ENCODE measurements at regions of chr5 and their contacts with region 1.

Region 1: GRCh38 chr5:135887351-135887864 is 8.2 kb downstream of the IL9 start:
- DNase-seq: peak; percentile 33
- ATAC-seq: peak; percentile 74
- H3K4me3 Mint-ChIP-seq: peak overlapping the region; percentile 25
- H3K27ac Mint-ChIP-seq: no peak overlapping the region
- H3K4me1 Mint-ChIP-seq: peaks cover 6% of the 10 kb centered on the region
- H3K27me3 Mint-ChIP-seq: peaks cover 4% of the 10 kb centered on the region
- CTCF ChIP-seq: peak; percentile 71

Region 2: GRCh38 chr5:136062366-136063274 is 175.2 kb after region 1 on chr5:
- CTCF ChIA-PET with region 1: no interaction called
- POLR2A ChIA-PET with region 1: no interaction called
- intact Hi-C with region 1: loop called (anchors 5 kb)
- DNase-seq: no peak
- ATAC-seq: peak; percentile 25
- H3K4me3 Mint-ChIP-seq: no peak overlapping the region
- H3K27ac Mint-ChIP-seq: no peak overlapping the region
- H3K4me1 Mint-ChIP-seq: no peaks in the 10 kb centered on the region
- H3K27me3 Mint-ChIP-seq: peaks cover 3% of the 10 kb centered on the region
- CTCF ChIP-seq: no peak

Region 3: DNA sequence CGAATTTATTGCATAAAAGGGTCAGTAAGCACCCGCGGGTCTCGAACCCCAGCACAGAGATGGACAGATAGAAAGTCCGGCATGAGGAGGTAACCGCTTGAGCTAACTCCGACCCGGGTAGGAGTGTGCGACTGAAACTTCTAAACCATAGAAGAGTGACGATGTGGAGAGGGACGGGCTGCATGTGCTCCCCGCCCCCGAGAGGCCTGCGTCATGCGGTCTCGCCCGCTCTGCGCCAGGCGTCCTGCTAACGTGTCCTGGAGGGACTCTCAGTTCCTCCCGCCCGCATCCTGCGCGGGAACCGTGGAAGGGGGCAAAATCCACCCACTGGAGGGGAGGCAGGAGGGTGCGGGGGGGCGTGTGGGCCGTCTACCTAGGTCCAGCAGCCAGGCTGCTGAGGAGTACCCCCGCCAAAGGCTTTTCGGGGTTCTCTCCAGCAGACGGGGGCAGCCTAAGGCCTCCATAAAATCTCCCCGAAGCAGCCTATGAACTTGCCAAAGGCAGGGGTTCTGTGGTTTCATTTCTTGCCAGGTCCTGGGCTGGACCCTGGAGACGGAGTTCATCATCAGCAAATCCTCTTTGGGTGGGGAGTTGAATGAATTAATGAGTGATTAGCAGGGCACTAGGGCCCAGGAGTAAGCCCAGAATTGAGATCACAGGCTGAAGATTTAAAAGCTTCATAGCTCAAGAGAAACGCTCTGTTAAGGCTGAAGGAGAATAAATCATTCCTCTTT is 193.2 kb after region 1 on chr5:
- CTCF ChIA-PET with region 1: no interaction called
- POLR2A ChIA-PET with region 1: no interaction called
- intact Hi-C with region 1: loop called (anchors 1 kb)
- DNase-seq: peak; percentile 50
- ATAC-seq: peak; percentile 94
- H3K4me3 Mint-ChIP-seq: peak overlapping the region; percentile 77
- H3K27ac Mint-ChIP-seq: peak overlapping the region; percentile 47
- H3K4me1 Mint-ChIP-seq: peaks cover 15% of the 10 kb centered on the region
- H3K27me3 Mint-ChIP-seq: peaks cover 31% of the 10 kb centered on the region
- CTCF ChIP-seq: no peak

Region 4: DNA sequence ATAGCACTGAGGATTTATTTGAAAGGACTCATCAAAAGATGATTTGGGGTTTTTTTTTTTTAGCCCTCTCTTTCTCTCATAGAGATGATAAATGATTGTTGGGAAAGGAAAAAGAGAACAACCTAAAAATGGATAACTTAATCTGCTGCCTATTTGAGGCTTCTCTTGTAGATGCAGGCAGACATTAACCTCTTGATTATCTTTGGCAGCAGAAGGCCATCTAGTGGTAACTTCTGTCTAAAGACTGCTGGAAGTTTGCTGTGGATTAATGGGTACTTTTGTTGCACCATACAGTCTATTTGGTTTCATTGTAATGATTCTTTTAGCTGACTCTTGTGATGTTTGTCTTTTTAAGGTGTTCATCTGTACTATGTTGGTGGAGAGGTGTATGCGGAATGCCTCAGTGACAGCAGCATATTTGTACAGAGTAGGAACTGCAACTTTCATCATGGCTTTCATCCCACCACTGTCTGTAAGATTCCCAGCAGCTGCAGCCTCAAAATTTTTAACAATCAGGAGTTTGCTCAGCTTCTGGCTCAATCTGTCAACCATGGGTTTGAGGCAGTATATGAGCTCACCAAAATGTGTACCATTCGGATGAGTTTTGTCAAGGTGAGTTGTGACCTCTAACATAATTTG is 286.7 kb after region 1 on chr5:
- CTCF ChIA-PET with region 1: no interaction called
- POLR2A ChIA-PET with region 1: no interaction called
- intact Hi-C with region 1: loop called (anchors 1 kb)
- DNase-seq: no peak
- ATAC-seq: no peak
- H3K4me3 Mint-ChIP-seq: no peak overlapping the region
- H3K27ac Mint-ChIP-seq: no peak overlapping the region
- H3K4me1 Mint-ChIP-seq: no peaks in the 10 kb centered on the region
- H3K27me3 Mint-ChIP-seq: no peaks in the 10 kb centered on the region
- CTCF ChIP-seq: no peak

Region 5: DNA sequence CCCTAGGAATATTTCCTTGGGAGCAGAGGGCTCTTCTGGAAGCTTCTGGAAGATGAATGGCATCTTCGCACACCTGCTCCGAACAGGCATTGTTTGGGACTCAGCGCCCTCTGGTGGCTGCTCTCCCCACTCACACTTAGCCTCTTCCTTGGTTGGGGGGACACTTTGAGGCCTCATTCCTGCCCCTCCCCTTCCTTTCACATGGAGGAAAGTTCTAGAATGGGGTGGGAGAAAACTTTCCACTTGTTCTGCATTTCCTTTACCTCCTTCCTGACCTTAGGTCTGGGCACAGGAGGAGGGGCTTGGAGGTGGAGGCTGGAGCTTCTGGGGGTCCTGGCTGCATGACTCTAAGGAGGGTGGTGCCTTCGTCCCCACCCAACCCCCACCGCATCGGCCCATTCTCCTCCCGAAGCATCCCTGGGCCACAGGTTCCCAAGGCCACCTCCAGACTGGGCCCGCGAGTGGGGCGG is 324.9 kb after region 1 on chr5:
- CTCF ChIA-PET with region 1: interaction called, 15 read pairs
- POLR2A ChIA-PET with region 1: no interaction called
- intact Hi-C with region 1: loop called (anchors 1 kb)
- DNase-seq: peak; percentile 37
- ATAC-seq: peak; percentile 28
- H3K4me3 Mint-ChIP-seq: no peak overlapping the region
- H3K27ac Mint-ChIP-seq: no peak overlapping the region
- H3K4me1 Mint-ChIP-seq: no peaks in the 10 kb centered on the region
- H3K27me3 Mint-ChIP-seq: peaks cover 20% of the 10 kb centered on the region
- CTCF ChIP-seq: peak; percentile 46

Region 6: DNA sequence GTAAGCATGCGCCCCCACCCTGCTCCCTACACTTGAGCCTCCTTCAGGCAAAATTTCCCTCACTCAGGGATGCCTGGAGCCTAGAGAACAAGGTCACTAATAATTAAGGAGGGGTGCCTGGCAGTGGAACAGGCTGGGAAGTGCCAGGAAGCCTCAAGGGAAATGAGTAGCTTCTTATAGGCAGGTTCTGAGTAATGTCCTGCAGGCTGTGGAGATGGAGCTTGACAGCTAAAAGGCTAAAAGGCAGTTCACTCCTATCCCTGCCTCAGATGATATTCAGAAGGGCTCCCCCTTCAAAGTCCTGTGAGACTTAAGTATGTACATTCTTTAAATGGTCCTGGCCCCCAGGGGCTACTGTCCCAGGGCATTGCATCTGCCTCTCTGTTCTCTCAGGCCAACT is 371.1 kb after region 1 on chr5:
- CTCF ChIA-PET with region 1: no interaction called
- POLR2A ChIA-PET with region 1: no interaction called
- intact Hi-C with region 1: no loop called
- DNase-seq: no peak
- ATAC-seq: no peak
- H3K4me3 Mint-ChIP-seq: no peak overlapping the region
- H3K27ac Mint-ChIP-seq: no peak overlapping the region
- H3K4me1 Mint-ChIP-seq: no peaks in the 10 kb centered on the region
- H3K27me3 Mint-ChIP-seq: peaks cover 18% of the 10 kb centered on the region
- CTCF ChIP-seq: no peak

Region 7: DNA sequence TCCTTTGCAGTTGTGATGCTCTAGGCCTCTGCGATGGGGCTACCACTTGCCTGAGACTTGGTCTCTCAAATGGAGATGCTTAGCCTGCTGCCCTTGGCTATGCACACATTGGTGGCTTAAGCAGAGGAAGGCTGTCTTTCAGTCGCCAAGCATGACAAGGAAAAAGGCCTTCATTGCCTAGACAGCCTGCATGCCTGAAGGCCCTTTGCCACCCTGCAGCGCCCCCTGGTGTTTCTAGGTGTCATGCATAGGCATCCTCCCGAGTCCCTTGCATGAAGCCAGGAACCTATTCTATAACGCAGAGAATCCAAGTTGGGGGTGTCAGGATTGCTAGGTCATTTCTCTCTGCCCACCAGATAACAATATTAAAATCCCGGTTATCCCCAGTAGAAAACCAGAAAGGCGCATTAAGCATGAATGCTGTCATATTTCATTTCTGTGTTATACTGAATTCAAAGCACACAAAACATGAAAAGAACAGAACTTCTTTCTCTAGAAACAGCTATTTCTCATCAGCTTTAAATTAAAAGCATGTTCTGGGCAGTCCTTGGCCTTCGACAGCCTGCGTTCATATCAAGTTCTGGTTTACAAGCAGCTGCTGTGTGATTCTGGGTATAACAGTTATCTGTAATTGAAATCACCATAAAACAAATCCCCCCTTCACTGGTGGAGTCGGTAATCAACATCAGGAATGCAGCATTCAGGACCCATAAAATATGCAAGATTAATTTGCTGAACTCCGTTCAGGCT is 537.6 kb after region 1 on chr5:
- CTCF ChIA-PET with region 1: no interaction called
- POLR2A ChIA-PET with region 1: no interaction called
- intact Hi-C with region 1: loop called (anchors 5 kb)
- DNase-seq: no peak
- ATAC-seq: no peak
- H3K4me3 Mint-ChIP-seq: no peak overlapping the region
- H3K27ac Mint-ChIP-seq: no peak overlapping the region
- H3K4me1 Mint-ChIP-seq: no peaks in the 10 kb centered on the region
- H3K27me3 Mint-ChIP-seq: no peaks in the 10 kb centered on the region
- CTCF ChIP-seq: no peak

Region 8: DNA sequence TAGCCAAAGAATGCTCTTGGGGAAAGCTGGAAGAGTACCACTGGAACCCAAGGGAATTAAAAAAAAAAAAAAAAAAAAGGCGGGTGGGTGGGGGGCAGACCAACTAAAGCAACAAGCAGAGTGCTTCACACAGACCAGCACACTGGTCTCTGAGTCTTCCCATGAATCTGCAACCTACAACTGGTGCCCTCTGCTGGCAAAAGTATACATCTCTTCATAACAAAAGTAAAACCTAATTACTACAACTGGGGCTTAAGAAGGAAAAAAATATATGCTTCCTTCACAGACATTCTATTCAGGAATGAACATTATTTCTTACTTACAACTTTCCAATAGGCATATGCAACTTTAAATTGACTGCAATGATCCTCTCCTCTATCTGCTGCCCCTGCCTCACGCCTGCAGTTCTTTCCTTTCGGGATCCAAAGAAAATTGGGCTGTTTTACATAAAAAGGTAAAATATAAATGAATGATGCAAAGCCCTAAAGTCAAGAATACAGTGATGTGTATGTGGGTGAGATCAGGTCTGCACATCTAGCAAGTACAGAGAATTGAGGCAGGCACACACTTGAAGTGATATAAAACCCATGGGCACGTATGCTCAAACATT is 1855.7 kb after region 1 on chr5:
- CTCF ChIA-PET with region 1: no interaction called
- POLR2A ChIA-PET with region 1: no interaction called
- intact Hi-C with region 1: loop called (anchors 5 kb)
- DNase-seq: no peak
- ATAC-seq: peak; percentile 88
- H3K4me3 Mint-ChIP-seq: no peak overlapping the region
- H3K27ac Mint-ChIP-seq: no peak overlapping the region
- H3K4me1 Mint-ChIP-seq: peaks cover 4% of the 10 kb centered on the region
- H3K27me3 Mint-ChIP-seq: no peaks in the 10 kb centered on the region
- CTCF ChIP-seq: no peak